Endothelial cell of umbilical vein (primary cell): ENCODE measurements at regions of chr11 and their contacts with region 1.

Region 1: DNA sequence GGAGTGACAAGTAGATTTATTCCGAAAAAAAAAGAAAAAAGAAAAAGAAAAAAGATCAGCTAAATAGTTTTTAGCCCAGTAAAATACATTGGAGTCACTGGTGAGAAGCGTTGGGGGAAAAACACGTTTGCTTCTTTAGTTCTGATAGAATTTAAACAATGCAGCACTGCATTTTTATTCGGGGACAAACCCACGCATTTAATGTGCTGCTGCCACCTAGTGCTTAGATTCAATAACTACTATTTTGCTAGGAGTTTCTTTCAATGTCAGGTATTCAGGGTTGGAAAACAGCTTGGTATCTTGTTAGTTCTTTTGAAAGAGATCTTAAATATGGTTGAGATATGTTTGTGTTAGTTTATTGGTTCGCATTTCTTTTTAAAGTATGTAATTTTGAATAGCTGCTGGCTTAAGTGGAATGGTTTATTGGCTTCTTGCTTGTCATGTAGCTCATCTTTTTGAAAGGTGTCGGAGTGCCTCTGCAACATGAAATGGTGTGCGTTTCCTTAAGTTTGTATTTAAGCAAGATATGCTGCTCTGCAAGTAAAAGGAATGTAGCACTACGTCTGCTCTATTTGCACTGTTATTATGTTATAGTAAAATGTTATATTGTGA is 41.9 kb downstream of the SVIP start:
- DNase-seq: peak; percentile 61
- H3K4me3 ChIP-seq: no peak overlapping the region
- H3K27ac ChIP-seq: no peak overlapping the region
- H3K4me1 ChIP-seq: peaks cover 34% of the 10 kb centered on the region
- H3K27me3 ChIP-seq: no peaks in the 10 kb centered on the region
- CTCF ChIP-seq: peak; percentile 52 to 53
- POLR2A ChIP-seq: no peak

Region 2: GRCh38 chr11:22244986-22245592 is 542.6 kb before region 1 on chr11:
- CTCF ChIA-PET with region 1: interaction called, 35 read pairs
- POLR2A ChIA-PET with region 1: no interaction called
- dilution Hi-C with region 1: no loop called
- intact Hi-C with region 1: loop called (anchors 1 kb)
- DNase-seq: peak; percentile 36
- H3K4me3 ChIP-seq: no peak overlapping the region
- H3K27ac ChIP-seq: no peak overlapping the region
- H3K4me1 ChIP-seq: no peaks in the 10 kb centered on the region
- H3K27me3 ChIP-seq: no peaks in the 10 kb centered on the region
- CTCF ChIP-seq: peak; percentile 46 to 63
- POLR2A ChIP-seq: no peak

Region 3: GRCh38 chr11:22426915-22427314 is 360.7 kb before region 1 on chr11:
- CTCF ChIA-PET with region 1: interaction called, 12 read pairs
- POLR2A ChIA-PET with region 1: no interaction called
- dilution Hi-C with region 1: no loop called
- intact Hi-C with region 1: loop called (anchors 1 kb)
- DNase-seq: no peak
- H3K4me3 ChIP-seq: no peak overlapping the region
- H3K27ac ChIP-seq: no peak overlapping the region
- H3K4me1 ChIP-seq: no peaks in the 10 kb centered on the region
- H3K27me3 ChIP-seq: peaks cover 5 to 17% of the 10 kb centered on the region in 2 experiments
- CTCF ChIP-seq: no peak
- POLR2A ChIP-seq: no peak

Region 4: DNA sequence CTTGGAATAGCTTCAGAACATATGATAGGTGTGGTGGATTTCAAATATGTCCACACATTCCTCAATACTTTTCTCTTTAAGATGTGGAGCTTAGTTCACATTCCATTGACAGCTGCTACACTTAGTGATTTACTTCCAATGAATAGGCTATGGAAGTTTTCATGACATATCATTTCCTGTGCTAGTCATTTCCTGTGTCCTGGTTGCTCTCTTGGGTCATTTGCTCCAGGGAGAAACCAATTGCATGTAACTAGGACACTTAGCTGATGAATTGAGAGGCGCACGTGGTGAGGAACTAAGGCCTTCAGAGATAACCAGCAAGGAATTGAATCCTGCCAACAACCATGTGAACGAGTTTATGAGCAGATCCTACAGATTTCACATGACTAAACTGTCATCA is 328.6 kb before region 1 on chr11:
- CTCF ChIA-PET with region 1: interaction called, 3 read pairs
- POLR2A ChIA-PET with region 1: no interaction called
- dilution Hi-C with region 1: no loop called
- intact Hi-C with region 1: loop called (anchors 1 kb)
- DNase-seq: peak; percentile 83
- H3K4me3 ChIP-seq: no peak overlapping the region
- H3K27ac ChIP-seq: peak overlapping the region; percentile 62
- H3K4me1 ChIP-seq: peaks cover 13% of the 10 kb centered on the region
- H3K27me3 ChIP-seq: no peaks in the 10 kb centered on the region
- CTCF ChIP-seq: no peak
- POLR2A ChIP-seq: no peak

Region 5: GRCh38 chr11:22625448-22626287 is 162.0 kb before region 1 on chr11 and contains the start of gene FANCF:
- CTCF ChIA-PET with region 1: interaction called, 7 read pairs
- POLR2A ChIA-PET with region 1: no interaction called
- dilution Hi-C with region 1: no loop called
- intact Hi-C with region 1: loop called (anchors 1 kb)
- DNase-seq: peak; percentile 99
- H3K4me3 ChIP-seq: peak within 1 kb of the TSS; percentile 75 to 89 (median 80)
- H3K27ac ChIP-seq: peak within 1 kb of the TSS; percentile 59
- H3K4me1 ChIP-seq: peaks cover 12% of the 10 kb centered on the region
- H3K27me3 ChIP-seq: no peaks in the 10 kb centered on the region
- CTCF ChIP-seq: no peak
- POLR2A ChIP-seq: peak; percentile 41
- total RNA-seq, gene FANCF: 7.4 and 7.6 TPM in 2 replicates

Region 6: DNA sequence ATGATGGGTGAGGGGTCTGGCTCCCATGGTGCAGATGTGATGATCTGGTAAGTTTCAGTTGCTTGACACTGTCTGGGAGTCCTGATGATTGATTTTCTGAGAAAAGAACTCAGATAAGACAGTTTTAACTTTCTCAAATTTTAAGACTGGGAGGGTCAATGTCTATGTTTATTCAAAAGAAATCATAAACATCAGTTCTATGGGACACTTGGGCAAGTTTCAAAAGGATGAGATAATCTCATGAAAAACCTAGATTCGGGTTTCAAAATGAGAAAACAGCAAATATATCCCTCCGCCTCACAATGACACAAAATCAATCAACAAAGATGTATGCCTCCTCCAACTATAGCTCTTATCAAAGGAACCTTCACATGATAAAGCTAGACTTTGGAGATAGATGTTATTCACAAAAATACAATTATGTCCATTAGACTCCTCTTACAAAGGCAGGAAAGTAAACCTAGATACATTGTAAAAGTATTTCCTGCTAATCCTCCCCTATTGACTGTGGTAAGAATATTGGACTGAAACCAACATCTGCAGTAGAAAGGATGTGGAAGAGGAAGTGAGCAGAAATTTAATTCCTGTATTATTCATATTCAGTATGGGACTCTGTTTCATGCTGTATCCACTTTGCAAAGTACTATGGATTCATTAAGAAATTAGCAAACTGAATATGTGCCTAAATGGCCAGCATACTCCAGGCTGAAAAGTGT is 20.4 kb after region 1 on chr11:
- CTCF ChIA-PET with region 1: interaction called, 26 read pairs
- POLR2A ChIA-PET with region 1: interaction called, 3 read pairs
- dilution Hi-C with region 1: no loop called
- intact Hi-C with region 1: loop called (anchors 1 kb)
- DNase-seq: peak; percentile 89
- H3K4me3 ChIP-seq: peak overlapping the region in 1 of 3 experiments; percentile 16
- H3K27ac ChIP-seq: peak overlapping the region; percentile 52
- H3K4me1 ChIP-seq: peaks cover 29% of the 10 kb centered on the region
- H3K27me3 ChIP-seq: no peaks in the 10 kb centered on the region
- CTCF ChIP-seq: no peak
- POLR2A ChIP-seq: peak; percentile 61

Region 7: GRCh38 chr11:22829231-22830081 is 41.8 kb after region 1 on chr11 and contains the start of gene SVIP:
- CTCF ChIA-PET with region 1: interaction called, 35 read pairs
- POLR2A ChIA-PET with region 1: interaction called, 3 read pairs
- dilution Hi-C with region 1: no loop called
- intact Hi-C with region 1: loop called (anchors 1 kb)
- DNase-seq: peak; percentile 99
- H3K4me3 ChIP-seq: peak within 1 kb of the TSS; percentile 91 to 99 (median 95)
- H3K27ac ChIP-seq: peak within 1 kb of the TSS; percentile 86
- H3K4me1 ChIP-seq: peaks cover 26% of the 10 kb centered on the region
- H3K27me3 ChIP-seq: no peaks in the 10 kb centered on the region
- CTCF ChIP-seq: peak; percentile 76 to 88
- POLR2A ChIP-seq: peak; percentile 94
- total RNA-seq, gene SVIP: 69.5 and 70.5 TPM in 2 replicates